Calu3 (cell line): ENCODE measurements at regions of chr2 and their contacts with region 1.

Region 1: GRCh38 chr2:231050018-231050901 is 6.4 kb upstream of the PSMD1 start:
- DNase-seq: peak; percentile 47
- H3K4me3 Mint-ChIP-seq: no peak overlapping the region
- H3K27ac Mint-ChIP-seq: no peak overlapping the region
- H3K4me1 Mint-ChIP-seq: peaks cover 10% of the 10 kb centered on the region
- H3K27me3 Mint-ChIP-seq: peaks cover 16% of the 10 kb centered on the region
- CTCF ChIP-seq: no peak

Region 2: DNA sequence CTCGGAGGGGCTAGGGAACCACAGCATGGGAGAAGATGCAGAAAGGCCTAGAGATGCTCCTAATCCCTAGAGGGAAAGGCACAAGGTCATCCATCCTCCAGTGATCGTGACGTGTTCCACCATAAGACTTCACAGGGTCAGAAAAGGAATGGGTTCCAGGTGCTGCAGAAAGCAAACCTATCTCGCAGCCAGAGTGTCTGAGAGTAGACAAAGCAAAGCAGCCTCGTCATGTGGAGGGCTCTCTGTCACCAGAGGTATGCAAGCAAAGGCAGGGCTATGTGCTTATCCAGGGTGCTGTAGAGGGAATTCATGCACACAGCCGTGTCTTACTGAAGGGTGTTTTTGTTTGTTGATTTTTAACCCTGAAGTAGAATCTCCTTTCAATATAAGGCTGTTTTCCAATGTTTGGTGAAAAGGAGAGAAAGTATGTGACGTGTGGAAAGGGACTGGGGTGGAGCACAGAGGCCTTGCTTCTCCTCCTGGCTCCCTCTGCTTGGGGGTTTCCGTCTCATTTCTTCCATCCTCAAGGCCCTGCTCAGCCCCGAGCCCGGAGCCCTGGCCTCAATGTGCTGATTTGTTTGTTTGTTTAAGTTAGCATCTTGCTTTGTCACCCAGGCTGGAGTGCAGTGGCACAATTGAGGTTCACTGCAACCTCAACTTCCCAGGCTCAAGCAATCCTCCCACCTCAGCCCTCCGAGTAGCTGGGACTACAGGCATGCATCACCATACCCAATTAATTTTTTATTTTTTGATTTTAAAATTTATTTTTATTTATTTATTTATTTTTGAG is 128.3 kb before region 1 on chr2:
- CTCF ChIA-PET with region 1: no interaction called
- intact Hi-C with region 1: no loop called
- DNase-seq: no peak
- H3K4me3 Mint-ChIP-seq: no peak overlapping the region
- H3K27ac Mint-ChIP-seq: no peak overlapping the region
- H3K4me1 Mint-ChIP-seq: no peaks in the 10 kb centered on the region
- H3K27me3 Mint-ChIP-seq: peaks cover 84% of the 10 kb centered on the region
- CTCF ChIP-seq: no peak

Region 3: DNA sequence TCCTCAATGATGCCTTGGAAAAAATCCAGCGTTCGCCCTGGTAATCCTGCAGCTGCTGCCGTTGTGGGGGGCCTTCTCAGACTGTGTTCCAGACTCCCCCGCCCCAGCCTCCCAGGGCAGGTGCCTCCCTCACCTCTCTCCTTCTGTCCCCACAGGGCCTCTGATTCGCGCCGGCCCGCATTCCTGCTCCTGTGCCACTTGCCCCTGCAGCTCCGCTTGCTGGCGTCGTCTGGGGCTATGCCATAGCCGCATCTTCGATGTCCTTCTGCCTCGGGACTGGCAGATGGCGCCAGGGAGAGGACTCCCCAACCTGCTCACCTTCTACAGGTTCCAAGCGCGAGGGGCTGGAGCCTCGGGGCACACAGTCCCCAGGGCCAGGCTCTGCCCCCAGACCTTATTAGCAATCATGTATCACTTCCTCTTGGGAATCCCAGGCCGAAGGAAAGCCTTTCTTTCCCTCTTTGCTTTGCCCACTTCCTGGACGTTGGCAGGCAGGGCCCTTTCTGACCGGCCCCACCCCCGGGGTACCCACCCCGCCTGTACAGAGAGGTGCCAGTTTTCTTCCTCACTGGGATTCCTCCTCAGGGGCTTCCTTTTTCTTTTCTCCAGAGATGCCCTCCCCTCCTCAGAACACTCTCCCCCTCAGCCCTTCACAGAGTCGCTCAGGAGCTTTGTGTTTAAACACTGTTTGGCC is 49.9 kb before region 1 on chr2:
- CTCF ChIA-PET with region 1: interaction called, 13 read pairs
- intact Hi-C with region 1: loop called (anchors 2 kb)
- DNase-seq: peak; percentile 61
- H3K4me3 Mint-ChIP-seq: peak overlapping the region; percentile 38
- H3K27ac Mint-ChIP-seq: no peak overlapping the region
- H3K4me1 Mint-ChIP-seq: peaks cover 11% of the 10 kb centered on the region
- H3K27me3 Mint-ChIP-seq: peaks cover 100% of the 10 kb centered on the region
- CTCF ChIP-seq: no peak